HCT116 (cell line): ENCODE measurements at regions of chr19 and their contacts with region 1.

Region 1: GRCh38 chr19:14571695-14572490 is at the start of gene NDUFB7:
- DNase-seq: peak; percentile 96
- ATAC-seq: peak; percentile 89
- H3K4me3 ChIP-seq: peak within 1 kb of the TSS; percentile 96 to 99
- H3K27ac ChIP-seq: peak within 1 kb of the TSS; percentile 87
- H3K4me1 ChIP-seq: peaks cover 7 to 24% of the 10 kb centered on the region in 2 experiments; a peak in 3 of 4 replicates
- H3K27me3 ChIP-seq: no peaks in the 10 kb centered on the region
- CTCF ChIP-seq: peak; percentile 64 to 74 (median 69)
- POLR2A ChIP-seq: peak; percentile 62
- RAD21 ChIP-seq: no peak
- total RNA-seq, gene NDUFB7: 167 TPM

Region 2: GRCh38 chr19:14542711-14543328 is 29.1 kb before region 1 on chr19:
- CTCF ChIA-PET with region 1: no interaction called
- POLR2A ChIA-PET with region 1: no interaction called
- RAD21 ChIA-PET with region 1: no interaction called
- intact Hi-C with region 1: no loop called
- DNase-seq: no peak
- ATAC-seq: peak; percentile 30; the same call in 1 of the 2 replicates
- H3K4me3 ChIP-seq: no peak overlapping the region
- H3K27ac ChIP-seq: no peak overlapping the region
- H3K4me1 ChIP-seq: peaks cover 0 to 16% of the 10 kb centered on the region in 2 experiments; a peak in 2 of 4 replicates
- H3K27me3 ChIP-seq: no peaks in the 10 kb centered on the region
- CTCF ChIP-seq: no peak
- POLR2A ChIP-seq: no peak
- RAD21 ChIP-seq: no peak

Region 3: GRCh38 chr19:14556662-14557188 is 15.2 kb before region 1 on chr19:
- CTCF ChIA-PET with region 1: interaction called, 14 read pairs
- POLR2A ChIA-PET with region 1: interaction called, 3 read pairs
- RAD21 ChIA-PET with region 1: interaction called in 1 of 2 experiments, 3 read pairs
- intact Hi-C with region 1: no loop called
- DNase-seq: peak; percentile 67
- ATAC-seq: peak; percentile 83
- H3K4me3 ChIP-seq: peak overlapping the region; percentile 13 to 23; a peak in 3 of 4 replicates
- H3K27ac ChIP-seq: peak overlapping the region; percentile 51
- H3K4me1 ChIP-seq: peaks cover 33 to 47% of the 10 kb centered on the region in 2 experiments
- H3K27me3 ChIP-seq: no peaks in the 10 kb centered on the region
- CTCF ChIP-seq: peak; percentile 57 to 97 (median 96); a peak in 5 of 6 replicates
- POLR2A ChIP-seq: no peak
- RAD21 ChIP-seq: no peak; the same call in 1 of the 2 replicates

Region 4: GRCh38 chr19:14689598-14690503 is 118.0 kb after region 1 on chr19 and contains the start of gene ZNF333:
- CTCF ChIA-PET with region 1: interaction called, 120 read pairs
- POLR2A ChIA-PET with region 1: interaction called, 22 read pairs
- RAD21 ChIA-PET with region 1: interaction called, 11 read pairs
- intact Hi-C with region 1: loop called (anchors 1 kb)
- DNase-seq: peak; percentile 85
- ATAC-seq: peak; percentile 96
- H3K4me3 ChIP-seq: peak within 1 kb of the TSS; percentile 79 to 90
- H3K27ac ChIP-seq: peak within 1 kb of the TSS; percentile 88
- H3K4me1 ChIP-seq: peaks cover 3 to 7% of the 10 kb centered on the region in 2 experiments; a peak in 3 of 4 replicates
- H3K27me3 ChIP-seq: no peaks in the 10 kb centered on the region
- CTCF ChIP-seq: no peak
- POLR2A ChIP-seq: peak; percentile 49
- RAD21 ChIP-seq: no peak
- total RNA-seq, gene ZNF333: 9.2 TPM

Region 5: DNA sequence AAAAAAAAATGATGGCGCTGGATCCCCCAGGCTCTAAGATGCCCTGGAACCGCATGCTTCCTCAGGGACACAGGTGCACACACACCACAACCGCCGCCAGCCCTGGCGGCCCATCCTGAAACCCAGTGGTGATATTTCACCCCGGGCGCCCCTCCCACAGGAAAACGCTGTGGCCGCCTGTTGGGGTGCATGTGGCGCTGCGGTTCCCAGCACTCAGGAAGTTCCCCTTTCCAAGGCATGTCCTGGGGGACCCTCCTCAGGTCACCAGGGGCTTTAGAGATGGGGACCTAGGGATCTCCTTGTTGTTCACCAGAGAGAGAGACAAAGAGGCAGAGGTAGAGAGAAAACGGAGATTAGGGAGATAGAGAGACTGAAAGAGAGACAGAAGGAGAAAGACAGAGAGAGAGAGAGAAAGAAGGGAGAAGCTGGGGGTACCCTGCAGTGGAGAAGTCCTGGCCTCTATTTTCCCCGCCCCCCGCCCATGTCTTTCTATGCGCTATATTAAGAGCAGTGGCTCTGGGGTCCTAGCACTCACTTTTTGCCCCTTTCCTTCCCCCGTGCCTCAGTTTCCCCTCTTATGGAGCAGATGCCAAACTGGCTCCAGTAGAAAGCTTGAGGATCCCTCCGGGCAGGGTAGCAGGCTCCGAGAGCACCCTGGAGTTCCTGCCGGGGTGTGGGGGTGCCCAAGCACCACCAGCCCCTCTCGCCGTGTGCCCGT is 204.1 kb after region 1 on chr19:
- CTCF ChIA-PET with region 1: interaction called, 5 read pairs
- POLR2A ChIA-PET with region 1: interaction called, 5 read pairs
- RAD21 ChIA-PET with region 1: no interaction called
- intact Hi-C with region 1: loop called (anchors 2 kb)
- DNase-seq: no peak
- ATAC-seq: peak; percentile 52
- H3K4me3 ChIP-seq: peak overlapping the region; percentile 74 to 80
- H3K27ac ChIP-seq: peak overlapping the region; percentile 58
- H3K4me1 ChIP-seq: peaks cover 6 to 8% of the 10 kb centered on the region in 2 experiments; a peak in 3 of 4 replicates
- H3K27me3 ChIP-seq: no peaks in the 10 kb centered on the region
- CTCF ChIP-seq: 0 out of 6 replicates have a peak, but pooled peaks of 1 of the 3 experiments have one; percentile 13
- POLR2A ChIP-seq: no peak
- RAD21 ChIP-seq: no peak

Region 6: GRCh38 chr19:14786421-14786851 is 214.5 kb after region 1 on chr19:
- CTCF ChIA-PET with region 1: interaction called, 7 read pairs
- POLR2A ChIA-PET with region 1: no interaction called
- RAD21 ChIA-PET with region 1: no interaction called
- intact Hi-C with region 1: loop called (anchors 2 kb)
- DNase-seq: no peak
- ATAC-seq: peak; percentile 84
- H3K4me3 ChIP-seq: peak overlapping the region; percentile 22 to 39
- H3K27ac ChIP-seq: no peak overlapping the region
- H3K4me1 ChIP-seq: peaks cover 14 to 24% of the 10 kb centered on the region in 2 experiments; a peak in 3 of 4 replicates
- H3K27me3 ChIP-seq: no peaks in the 10 kb centered on the region
- CTCF ChIP-seq: peak; percentile 70 to 95 (median 90); a peak in 5 of 6 replicates
- POLR2A ChIP-seq: no peak
- RAD21 ChIP-seq: peak; percentile 85

Region 7: DNA sequence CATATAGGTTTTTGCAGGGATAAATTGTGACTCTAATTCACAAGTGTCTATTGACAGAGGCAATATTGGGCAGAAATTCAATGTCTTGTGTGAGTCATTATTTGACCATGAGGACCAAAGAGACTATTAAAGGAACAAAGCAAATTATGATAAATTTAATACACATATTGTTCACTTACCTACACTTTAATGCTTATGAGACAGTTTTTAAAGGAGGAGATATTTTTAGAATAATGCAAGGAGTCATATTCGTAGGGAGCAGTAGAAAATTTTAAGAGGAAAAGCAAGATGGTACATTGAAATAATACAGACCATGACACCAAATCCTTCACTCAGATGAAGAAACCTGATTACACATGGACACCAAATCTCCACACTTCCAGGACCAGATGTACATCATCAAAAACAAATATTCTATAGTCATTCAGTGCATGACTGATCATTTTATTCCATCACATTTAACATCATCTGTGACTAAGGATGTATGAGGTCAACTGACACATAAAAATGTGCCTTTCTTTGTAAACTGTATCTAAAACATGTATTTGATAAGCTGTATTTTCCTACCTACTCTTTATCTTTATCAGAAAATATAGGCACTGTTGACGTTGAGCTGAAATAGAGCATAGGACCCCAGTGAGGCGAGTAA is 318.2 kb after region 1 on chr19:
- CTCF ChIA-PET with region 1: interaction called, 3 read pairs
- POLR2A ChIA-PET with region 1: no interaction called
- RAD21 ChIA-PET with region 1: no interaction called
- intact Hi-C with region 1: loop called (anchors 2 kb)
- DNase-seq: no peak
- ATAC-seq: no peak
- H3K4me3 ChIP-seq: no peak overlapping the region
- H3K27ac ChIP-seq: no peak overlapping the region
- H3K4me1 ChIP-seq: peaks cover 3 to 8% of the 10 kb centered on the region in 2 experiments; a peak in 2 of 4 replicates
- H3K27me3 ChIP-seq: peaks cover 42% of the 10 kb centered on the region
- CTCF ChIP-seq: no peak
- POLR2A ChIP-seq: no peak
- RAD21 ChIP-seq: no peak